Endothelial cell of umbilical vein (primary cell): ENCODE measurements at regions of chr1 and their contacts with region 1.

Region 1: GRCh38 chr1:224513787-224514209 is 79.2 kb upstream of the WDR26 start:
- DNase-seq: peak; percentile 77
- H3K4me3 ChIP-seq: no peak overlapping the region
- H3K27ac ChIP-seq: no peak overlapping the region
- H3K4me1 ChIP-seq: no peaks in the 10 kb centered on the region
- H3K27me3 ChIP-seq: no peaks in the 10 kb centered on the region
- CTCF ChIP-seq: peak; percentile 87 to 92
- POLR2A ChIP-seq: no peak

Region 2: GRCh38 chr1:224497714-224498573 is 15.9 kb before region 1 on chr1:
- CTCF ChIA-PET with region 1: interaction called, 21 read pairs
- POLR2A ChIA-PET with region 1: no interaction called
- dilution Hi-C with region 1: no loop called
- intact Hi-C with region 1: no loop called
- DNase-seq: peak; percentile 89
- H3K4me3 ChIP-seq: peak overlapping the region in 1 of 3 experiments; percentile 20
- H3K27ac ChIP-seq: peak overlapping the region; percentile 94
- H3K4me1 ChIP-seq: peaks cover 30% of the 10 kb centered on the region
- H3K27me3 ChIP-seq: no peaks in the 10 kb centered on the region
- CTCF ChIP-seq: no peak
- POLR2A ChIP-seq: no peak

Region 3: GRCh38 chr1:224503161-224504118 is 10.4 kb before region 1 on chr1:
- CTCF ChIA-PET with region 1: interaction called, 21 read pairs
- POLR2A ChIA-PET with region 1: no interaction called
- dilution Hi-C with region 1: no loop called
- intact Hi-C with region 1: no loop called
- DNase-seq: peak; percentile 93
- H3K4me3 ChIP-seq: no peak overlapping the region
- H3K27ac ChIP-seq: peak overlapping the region; percentile 23
- H3K4me1 ChIP-seq: peaks cover 28% of the 10 kb centered on the region
- H3K27me3 ChIP-seq: no peaks in the 10 kb centered on the region
- CTCF ChIP-seq: peak in 1 of 2 donors; percentile 27
- POLR2A ChIP-seq: no peak

Region 4: GRCh38 chr1:224579526-224579925 is 65.7 kb after region 1 on chr1:
- CTCF ChIA-PET with region 1: interaction called, 3 read pairs
- POLR2A ChIA-PET with region 1: no interaction called
- dilution Hi-C with region 1: no loop called
- intact Hi-C with region 1: loop called (anchors 5 kb)
- DNase-seq: no peak
- H3K4me3 ChIP-seq: no peak overlapping the region
- H3K27ac ChIP-seq: no peak overlapping the region
- H3K4me1 ChIP-seq: no peaks in the 10 kb centered on the region
- H3K27me3 ChIP-seq: no peaks in the 10 kb centered on the region
- CTCF ChIP-seq: no peak
- POLR2A ChIP-seq: no peak

Region 5: GRCh38 chr1:224623743-224624333 is 110.0 kb after region 1 on chr1:
- CTCF ChIA-PET with region 1: no interaction called
- POLR2A ChIA-PET with region 1: no interaction called
- dilution Hi-C with region 1: loop called (anchors 25 kb)
- intact Hi-C with region 1: loop called (anchors 1 kb)
- DNase-seq: peak; percentile 51
- H3K4me3 ChIP-seq: no peak overlapping the region
- H3K27ac ChIP-seq: peak overlapping the region; percentile 50
- H3K4me1 ChIP-seq: peaks cover 20% of the 10 kb centered on the region
- H3K27me3 ChIP-seq: peaks cover 11 to 17% of the 10 kb centered on the region in 2 experiments
- CTCF ChIP-seq: no peak
- POLR2A ChIP-seq: no peak

Region 6: GRCh38 chr1:224644553-224645154 is 130.9 kb after region 1 on chr1:
- CTCF ChIA-PET with region 1: interaction called, 10 read pairs
- POLR2A ChIA-PET with region 1: no interaction called
- dilution Hi-C with region 1: no loop called
- intact Hi-C with region 1: loop called (anchors 1 kb)
- DNase-seq: peak; percentile 54
- H3K4me3 ChIP-seq: no peak overlapping the region
- H3K27ac ChIP-seq: no peak overlapping the region
- H3K4me1 ChIP-seq: peaks cover under 1% of the 10 kb centered on the region
- H3K27me3 ChIP-seq: no peaks in the 10 kb centered on the region
- CTCF ChIP-seq: peak; percentile 72 to 76
- POLR2A ChIP-seq: no peak

Region 7: DNA sequence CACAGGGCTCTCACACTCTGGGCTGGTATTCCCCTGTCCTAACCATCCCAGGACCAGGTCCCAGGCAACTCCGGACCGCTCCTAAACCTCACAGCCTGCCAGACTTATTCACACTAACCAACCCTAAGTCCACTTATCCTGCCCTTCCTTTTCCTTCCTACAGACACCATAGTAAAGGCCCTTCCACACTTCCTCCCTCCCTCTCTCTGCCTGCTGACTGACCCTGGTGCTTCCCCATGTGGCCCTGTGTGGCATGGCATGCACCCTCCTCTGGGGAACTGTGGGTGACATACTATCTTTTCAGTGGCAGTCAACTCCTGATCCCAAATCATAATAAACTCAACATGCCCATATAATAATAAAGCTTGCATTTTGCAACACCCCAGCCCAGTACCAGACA is 260.6 kb after region 1 on chr1:
- CTCF ChIA-PET with region 1: no interaction called
- POLR2A ChIA-PET with region 1: no interaction called
- dilution Hi-C with region 1: no loop called
- intact Hi-C with region 1: no loop called
- DNase-seq: no peak
- H3K4me3 ChIP-seq: no peak overlapping the region
- H3K27ac ChIP-seq: no peak overlapping the region
- H3K4me1 ChIP-seq: no peaks in the 10 kb centered on the region
- H3K27me3 ChIP-seq: no peaks in the 10 kb centered on the region
- CTCF ChIP-seq: no peak
- POLR2A ChIP-seq: no peak

Region 8: DNA sequence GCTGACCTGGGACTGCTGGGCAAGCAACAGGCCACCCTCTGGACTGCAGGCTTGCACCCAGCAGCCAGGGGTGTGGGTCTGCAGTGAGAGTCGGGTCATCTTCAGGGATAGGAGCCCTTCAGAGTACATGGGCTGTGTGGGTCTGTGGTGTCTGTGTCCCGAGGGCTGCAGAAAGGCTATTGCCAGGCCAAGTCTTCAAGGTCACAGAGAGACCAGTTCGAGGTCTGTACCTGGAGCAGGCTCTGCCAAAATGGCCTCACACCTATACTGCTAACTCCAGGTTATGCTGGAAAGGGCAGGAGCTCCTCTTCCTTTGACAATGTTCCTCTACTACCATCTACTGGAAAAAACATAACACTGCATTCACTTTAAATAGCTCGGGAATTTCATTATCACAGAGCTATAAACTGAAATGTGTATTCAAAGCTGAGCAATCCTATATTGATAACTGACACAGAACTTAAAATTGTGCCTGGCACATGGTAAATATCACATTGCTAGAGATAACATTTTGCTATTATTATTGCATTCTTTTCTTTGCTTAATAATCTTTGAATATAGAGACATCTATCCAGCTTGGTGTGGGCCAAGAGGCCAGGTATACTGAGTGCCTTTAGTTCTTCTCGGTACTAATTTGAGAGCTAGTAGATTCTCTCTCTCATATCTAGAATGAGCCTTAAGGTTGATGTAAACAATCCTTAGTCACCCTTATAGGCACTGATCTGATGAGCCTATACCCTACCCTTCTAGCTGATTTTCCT is 408.8 kb after region 1 on chr1:
- CTCF ChIA-PET with region 1: interaction called, 48 read pairs
- POLR2A ChIA-PET with region 1: no interaction called
- dilution Hi-C with region 1: no loop called
- intact Hi-C with region 1: loop called (anchors 1 kb)
- DNase-seq: peak; percentile 24
- H3K4me3 ChIP-seq: no peak overlapping the region
- H3K27ac ChIP-seq: no peak overlapping the region
- H3K4me1 ChIP-seq: no peaks in the 10 kb centered on the region
- H3K27me3 ChIP-seq: peaks cover 0 to 4% of the 10 kb centered on the region in 2 experiments
- CTCF ChIP-seq: peak; percentile 44 to 45
- POLR2A ChIP-seq: no peak